CD4-positive, alpha-beta memory T cell (primary cell): ENCODE measurements at regions of chr17 and their contacts with region 1.

Region 1: GRCh38 chr17:14203388-14203787 is 33.3 kb downstream of the CDRT15 start:
- DNase-seq: peak; percentile 47 to 75 (median 57)
- H3K4me3 ChIP-seq: no peak overlapping the region
- H3K4me3 Mint-ChIP-seq: peak overlapping the region; percentile 41 to 81 (median 52)
- H3K27ac ChIP-seq: peak overlapping the region; percentile 60
- H3K27ac Mint-ChIP-seq: peak overlapping the region; percentile 87 to 96 (median 89)
- H3K4me1 ChIP-seq: peaks cover 92% of the 10 kb centered on the region
- H3K4me1 Mint-ChIP-seq: peaks cover 73 to 98% (median 84%) of the 10 kb centered on the region in 4 donors
- H3K27me3 ChIP-seq: no peaks in the 10 kb centered on the region
- H3K27me3 Mint-ChIP-seq: no peaks in the 10 kb centered on the region

Region 2: GRCh38 chr17:13017659-13018459 is 1185.5 kb before region 1 on chr17 and contains the start of gene ELAC2:
- CTCF ChIA-PET with region 1: no interaction called
- POLR2A ChIA-PET with region 1: no interaction called
- intact Hi-C with region 1: loop called (anchors 10 kb)
- DNase-seq: peak; percentile 96 to 98 (median 96)
- H3K4me3 ChIP-seq: peak within 1 kb of the TSS; percentile 77 to 94
- H3K4me3 Mint-ChIP-seq: peak within 1 kb of the TSS; percentile 95 to 100 (median 98)
- H3K27ac ChIP-seq: peak within 1 kb of the TSS; percentile 73
- H3K27ac Mint-ChIP-seq: peak within 1 kb of the TSS; percentile 94 to 98 (median 97)
- H3K4me1 ChIP-seq: peaks cover 18% of the 10 kb centered on the region
- H3K4me1 Mint-ChIP-seq: peaks cover 15 to 44% (median 32%) of the 10 kb centered on the region in 4 donors
- H3K27me3 ChIP-seq: no peaks in the 10 kb centered on the region
- H3K27me3 Mint-ChIP-seq: no peaks in the 10 kb centered on the region
- total RNA-seq, gene ELAC2: 65.8 to 73.2 TPM

Region 3: DNA sequence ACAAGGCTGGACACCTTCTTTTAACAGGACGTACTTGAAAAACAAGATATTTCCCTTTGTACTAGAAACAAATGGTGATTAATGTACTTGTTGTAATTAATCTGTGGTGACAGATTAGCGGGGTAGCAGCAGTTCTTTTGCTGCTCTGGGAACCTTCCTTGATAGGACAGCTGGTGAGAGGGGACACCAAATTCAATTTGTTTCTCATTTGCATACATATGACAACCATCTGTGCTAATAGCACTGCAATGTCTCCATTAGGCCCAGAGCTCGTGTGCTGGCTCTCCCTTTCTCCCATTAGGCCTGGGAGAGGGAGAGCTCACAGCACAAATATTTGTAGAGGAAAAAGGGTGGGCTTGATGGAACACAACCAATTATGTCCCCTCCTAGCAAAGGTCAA is 380.7 kb before region 1 on chr17:
- CTCF ChIA-PET with region 1: no interaction called
- POLR2A ChIA-PET with region 1: no interaction called
- intact Hi-C with region 1: loop called (anchors 10 kb)
- DNase-seq: no peak
- H3K4me3 ChIP-seq: no peak overlapping the region
- H3K4me3 Mint-ChIP-seq: no peak overlapping the region
- H3K27ac ChIP-seq: no peak overlapping the region
- H3K27ac Mint-ChIP-seq: no peak overlapping the region
- H3K4me1 ChIP-seq: no peaks in the 10 kb centered on the region
- H3K4me1 Mint-ChIP-seq: peaks cover 0 to 5% (median 3%) of the 10 kb centered on the region in 4 donors
- H3K27me3 ChIP-seq: no peaks in the 10 kb centered on the region
- H3K27me3 Mint-ChIP-seq: no peaks in the 10 kb centered on the region

Region 4: DNA sequence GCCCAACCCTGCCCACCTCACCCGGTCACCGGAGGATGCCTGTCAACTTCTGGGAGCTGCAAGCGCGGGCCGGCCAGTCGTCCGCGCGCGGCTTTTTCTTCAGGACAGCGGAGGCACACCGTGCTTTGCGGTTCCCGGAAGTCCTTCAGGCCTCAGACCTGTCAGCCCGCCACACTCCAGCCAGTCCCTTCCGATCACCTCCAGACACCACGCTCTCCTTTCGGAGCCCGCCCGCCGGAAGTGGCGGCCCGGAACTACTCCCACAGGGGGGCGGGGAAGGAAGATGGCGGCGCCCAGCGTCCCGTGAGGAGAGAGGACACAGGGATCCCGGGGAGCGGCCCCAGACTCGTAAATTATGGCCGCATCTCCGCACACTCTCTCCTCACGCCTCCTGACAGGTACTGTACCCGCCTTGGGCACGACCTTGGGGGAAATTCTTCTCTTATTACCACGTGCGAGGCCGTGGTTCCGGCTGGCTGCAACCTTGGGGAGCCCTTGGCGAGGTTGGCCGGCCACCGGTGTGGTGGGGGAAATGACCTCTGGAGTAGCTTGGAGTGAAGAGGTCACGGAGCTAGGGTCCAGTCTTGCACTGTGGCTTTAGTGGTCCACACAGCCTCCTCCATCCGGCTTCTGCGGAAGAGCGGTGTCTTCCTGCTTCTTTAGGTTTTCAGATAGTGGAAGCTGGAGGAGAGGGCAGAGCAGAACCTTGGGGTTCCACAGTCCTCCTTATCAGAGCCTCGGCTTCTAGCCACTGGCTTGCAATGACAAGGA is 134.0 kb before region 1 on chr17 and contains the start of gene COX10:
- CTCF ChIA-PET with region 1: interaction called, 6 read pairs
- POLR2A ChIA-PET with region 1: interaction called, 11 read pairs
- intact Hi-C with region 1: loop called (anchors 1 kb)
- DNase-seq: peak; percentile 75 to 86 (median 78)
- H3K4me3 ChIP-seq: peak within 1 kb of the TSS; percentile 96 to 98
- H3K4me3 Mint-ChIP-seq: peak within 1 kb of the TSS; percentile 93 to 96 (median 95)
- H3K27ac ChIP-seq: peak within 1 kb of the TSS; percentile 71
- H3K27ac Mint-ChIP-seq: peak within 1 kb of the TSS; percentile 89 to 95 (median 95)
- H3K4me1 ChIP-seq: peaks cover 30% of the 10 kb centered on the region
- H3K4me1 Mint-ChIP-seq: peaks cover 34 to 59% (median 46%) of the 10 kb centered on the region in 4 donors
- H3K27me3 ChIP-seq: no peaks in the 10 kb centered on the region
- H3K27me3 Mint-ChIP-seq: no peaks in the 10 kb centered on the region
- total RNA-seq, gene COX10: 16.9 to 17.6 TPM

Region 5: DNA sequence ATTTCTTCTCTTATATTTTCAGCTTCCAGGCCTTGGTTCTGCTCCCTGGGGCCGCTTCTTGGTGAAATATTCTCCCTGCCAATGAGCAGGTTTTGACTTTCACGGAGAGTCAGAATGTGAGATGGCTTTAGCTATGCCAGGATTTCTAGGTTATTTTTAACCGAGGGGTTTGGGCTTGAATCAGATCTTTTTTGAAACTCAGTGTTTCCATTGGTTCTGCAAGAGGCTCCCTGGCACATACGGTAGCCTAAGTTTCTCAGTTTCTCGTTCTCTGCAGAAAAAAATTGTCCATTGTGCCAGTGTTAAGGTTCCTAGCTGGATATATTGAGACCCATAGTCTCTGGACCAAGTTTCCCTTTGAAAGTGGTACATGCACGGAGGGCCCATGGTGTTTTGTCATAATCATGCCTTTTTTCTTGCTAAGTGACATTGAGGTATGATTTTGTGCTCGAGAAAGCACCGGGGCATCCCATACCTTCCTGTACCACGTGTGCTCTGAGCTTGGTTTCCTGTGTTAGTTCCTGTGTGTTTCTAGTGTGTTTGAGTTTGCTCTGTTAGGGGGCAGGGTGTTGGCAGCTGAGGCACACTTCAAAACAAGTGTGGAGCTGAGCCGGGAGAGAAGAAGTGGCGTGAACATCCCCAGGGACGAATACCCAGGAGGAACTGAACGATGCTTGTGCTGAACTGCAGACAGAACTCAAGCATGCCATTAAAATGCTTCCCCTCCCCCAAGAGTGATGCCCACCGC is 224.7 kb after region 1 on chr17:
- CTCF ChIA-PET with region 1: no interaction called
- POLR2A ChIA-PET with region 1: interaction called, 4 read pairs
- intact Hi-C with region 1: loop called (anchors 2 kb)
- DNase-seq: peak; percentile 65 to 73 (median 69)
- H3K4me3 ChIP-seq: peak overlapping the region in 1 of 2 donors; percentile 39
- H3K4me3 Mint-ChIP-seq: peak overlapping the region; percentile 79 to 93 (median 86)
- H3K27ac ChIP-seq: peak overlapping the region; percentile 45
- H3K27ac Mint-ChIP-seq: peak overlapping the region; percentile 54 to 92 (median 88)
- H3K4me1 ChIP-seq: peaks cover 51% of the 10 kb centered on the region
- H3K4me1 Mint-ChIP-seq: peaks cover 48 to 62% (median 57%) of the 10 kb centered on the region in 4 donors
- H3K27me3 ChIP-seq: no peaks in the 10 kb centered on the region
- H3K27me3 Mint-ChIP-seq: no peaks in the 10 kb centered on the region

Region 6: DNA sequence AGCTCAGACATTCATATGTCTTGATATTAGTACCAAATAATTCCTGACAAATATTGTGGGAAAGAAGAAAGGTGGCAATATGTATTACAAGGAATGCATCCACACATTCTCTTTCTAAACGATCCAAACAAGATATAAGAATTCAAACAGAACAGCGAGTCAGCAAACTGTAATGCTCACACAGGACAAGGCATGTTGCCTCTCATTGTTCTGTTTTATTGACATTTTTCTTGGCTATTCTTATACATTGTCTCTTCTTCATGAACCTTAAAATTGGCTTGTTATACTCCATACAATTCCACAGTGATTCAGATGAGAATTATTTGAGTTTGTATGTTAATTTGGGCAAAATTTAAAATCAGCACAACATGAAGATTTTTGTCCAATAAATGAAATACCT is 286.6 kb after region 1 on chr17:
- CTCF ChIA-PET with region 1: no interaction called
- POLR2A ChIA-PET with region 1: no interaction called
- intact Hi-C with region 1: no loop called
- DNase-seq: no peak
- H3K4me3 ChIP-seq: no peak overlapping the region
- H3K4me3 Mint-ChIP-seq: no peak overlapping the region
- H3K27ac ChIP-seq: no peak overlapping the region
- H3K27ac Mint-ChIP-seq: no peak overlapping the region
- H3K4me1 ChIP-seq: no peaks in the 10 kb centered on the region
- H3K4me1 Mint-ChIP-seq: no peaks in the 10 kb centered on the region
- H3K27me3 ChIP-seq: no peaks in the 10 kb centered on the region
- H3K27me3 Mint-ChIP-seq: no peaks in the 10 kb centered on the region